ENCODE measurements at regions of chr6 and their contacts with region 1.

Region 1: DNA sequence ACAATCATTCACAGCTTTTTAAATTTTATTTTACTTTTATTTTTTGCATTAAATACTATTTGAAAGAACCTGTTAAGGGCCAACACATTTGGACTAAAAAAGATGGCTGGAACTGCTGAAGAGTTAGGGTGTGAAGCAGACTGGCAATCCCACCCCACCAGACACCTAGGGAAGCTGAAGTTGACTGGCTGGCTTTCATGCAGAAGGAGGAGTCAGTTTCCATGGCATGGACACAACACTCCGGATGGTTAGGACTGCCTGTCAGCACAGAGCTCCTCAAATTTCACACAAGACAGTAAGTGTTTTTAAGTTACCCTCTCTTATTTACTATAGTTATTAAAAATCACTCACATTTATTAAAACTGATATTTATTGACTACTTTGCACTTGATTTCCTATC is at the start of gene ANKRD66:
- DNase-seq: no peak
- H3K4me3 ChIP-seq: no peak within 1 kb of the TSS
- H3K27ac ChIP-seq: no peak within 1 kb of the TSS
- H3K4me1 ChIP-seq: peaks cover 2 to 10% (median 4%) of the 10 kb centered on the region in 4 experiments; a peak in 6 of 7 replicates
- H3K27me3 ChIP-seq: no peaks in the 10 kb centered on the region
- CTCF ChIP-seq: no peak
- EP300 ChIP-seq: no peak
- POLR2A ChIP-seq: no peak
- RAD21 ChIP-seq: no peak
- total RNA-seq, gene ANKRD66: not detected in 2 replicates

Region 2: DNA sequence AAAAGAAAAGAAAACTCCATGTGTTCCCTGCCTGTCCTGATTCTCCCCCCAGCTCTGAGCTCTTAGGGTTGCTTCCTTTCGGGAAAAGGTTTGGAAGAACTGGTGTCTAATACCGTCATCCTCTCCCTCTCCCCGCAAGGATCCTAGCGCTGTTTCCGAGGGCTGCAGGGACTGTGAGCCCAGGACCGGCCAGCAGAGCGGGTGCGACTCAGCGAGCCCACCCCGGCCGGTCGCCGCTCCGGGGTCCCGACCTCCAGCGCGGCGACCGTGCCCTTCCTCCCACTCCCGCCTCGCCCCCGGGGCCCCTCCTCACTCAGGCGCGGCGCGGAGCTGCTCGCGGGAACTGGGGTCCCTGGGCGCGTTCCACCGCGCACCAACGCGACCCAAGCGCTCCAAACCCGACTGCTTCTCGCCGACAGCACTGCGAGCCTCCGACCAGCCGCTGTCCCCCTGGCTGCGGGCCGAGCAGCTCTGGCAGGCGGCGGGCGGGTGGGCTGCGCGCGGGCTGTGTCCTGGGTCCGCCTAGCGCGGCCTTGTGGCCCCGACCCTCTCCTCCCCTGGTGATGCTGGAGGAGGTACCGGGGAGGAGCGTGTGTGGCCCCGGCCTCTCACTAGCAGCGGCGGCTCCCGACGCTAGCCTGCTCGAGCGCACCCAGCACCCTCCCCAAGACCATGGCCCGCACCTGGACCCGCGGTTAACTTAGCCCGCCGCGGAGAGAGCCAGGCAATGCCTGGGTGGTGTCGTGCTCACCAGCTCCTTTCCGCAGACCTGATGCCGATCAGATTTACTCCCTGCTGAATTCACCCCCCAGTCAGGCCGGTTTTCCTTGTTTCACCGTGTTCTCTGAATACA is 11.6 kb before region 1 on chr6 and contains the start of gene PLA2G7:
- CTCF ChIA-PET with region 1: interaction called, 41 read pairs
- POLR2A ChIA-PET with region 1: interaction called, 15 read pairs
- DNase-seq: peak in 1 of 2 experiments; percentile 74
- H3K4me3 ChIP-seq: peak within 1 kb of the TSS; percentile 58 to 72 (median 67)
- H3K27ac ChIP-seq: no peak within 1 kb of the TSS
- H3K4me1 ChIP-seq: peaks cover 0 to 1% (median 0%) of the 10 kb centered on the region in 4 experiments; a peak in 3 of 7 replicates
- H3K27me3 ChIP-seq: peaks cover 0 to 21% (median 14%) of the 10 kb centered on the region in 4 experiments; a peak in 5 of 7 replicates
- CTCF ChIP-seq: peak in 1 of 3 experiments; percentile 3; a peak in 1 of 4 replicates
- EP300 ChIP-seq: no peak
- POLR2A ChIP-seq: no peak; a peak in 1 of 3 replicates
- RAD21 ChIP-seq: no peak
- total RNA-seq, gene PLA2G7: 1.5 and 1.9 TPM in 2 replicates